ENCODE measurements at regions of chr11 and their contacts with region 1.

Region 1: DNA sequence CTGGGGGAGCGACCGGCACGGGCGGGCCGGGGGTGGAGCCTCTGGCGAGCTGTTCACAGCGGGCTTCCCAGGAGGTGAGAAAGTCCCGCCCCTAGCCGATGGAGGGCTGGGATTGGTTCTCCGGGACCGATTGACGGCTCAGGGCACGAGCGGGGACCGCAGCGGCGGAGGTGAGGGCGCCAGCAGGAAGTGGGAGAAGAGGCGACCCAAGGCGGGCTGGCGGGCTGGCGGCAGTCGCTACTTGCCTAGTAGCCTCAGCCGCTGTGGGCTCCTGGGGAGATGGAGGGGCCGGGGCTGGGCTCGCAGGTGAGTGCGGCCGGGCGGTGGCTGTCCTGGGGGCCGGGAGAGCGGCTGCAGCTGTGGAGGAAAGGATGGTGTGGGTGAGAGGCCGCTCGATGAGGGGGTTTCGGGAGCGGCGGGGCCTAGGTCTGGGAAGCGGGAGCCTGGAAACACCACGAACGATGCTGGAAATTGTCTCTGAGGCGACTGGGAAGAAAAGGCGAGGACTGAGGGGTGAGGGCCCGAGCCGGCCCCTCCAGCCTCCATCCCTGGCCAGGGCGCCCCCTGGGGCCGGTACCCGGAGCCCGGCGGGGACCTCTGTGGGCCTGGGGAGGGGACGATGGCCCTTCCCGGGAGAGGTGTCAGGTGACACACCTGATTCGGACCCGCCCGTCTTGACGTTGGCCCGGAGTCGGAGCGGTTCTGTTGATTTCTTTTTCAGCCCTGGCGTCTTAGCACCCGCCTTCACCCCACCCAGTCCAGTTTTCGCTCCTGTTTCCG is at the start of gene ZDHHC13:
- DNase-seq: peak; percentile 80 to 94 (median 92)
- ATAC-seq: peak; percentile 99
- H3K4me3 ChIP-seq: peak within 1 kb of the TSS; percentile 82
- H3K4me3 Mint-ChIP-seq: peak within 1 kb of the TSS; percentile 89 to 95 (median 93)
- H3K27ac ChIP-seq: peak within 1 kb of the TSS; percentile 73
- H3K27ac Mint-ChIP-seq: peak within 1 kb of the TSS; percentile 72 to 93 (median 89)
- H3K4me1 ChIP-seq: peaks cover 11 to 14% of the 10 kb centered on the region in 2 donors
- H3K4me1 Mint-ChIP-seq: peaks cover 35 to 57% (median 53%) of the 10 kb centered on the region in 7 donors
- H3K27me3 ChIP-seq: no peaks in the 10 kb centered on the region
- H3K27me3 Mint-ChIP-seq: peaks cover 0 to 17% (median 0%) of the 10 kb centered on the region in 5 donors
- total RNA-seq, gene ZDHHC13: 9.3 to 21.3 (median 14.2) TPM

Region 2: DNA sequence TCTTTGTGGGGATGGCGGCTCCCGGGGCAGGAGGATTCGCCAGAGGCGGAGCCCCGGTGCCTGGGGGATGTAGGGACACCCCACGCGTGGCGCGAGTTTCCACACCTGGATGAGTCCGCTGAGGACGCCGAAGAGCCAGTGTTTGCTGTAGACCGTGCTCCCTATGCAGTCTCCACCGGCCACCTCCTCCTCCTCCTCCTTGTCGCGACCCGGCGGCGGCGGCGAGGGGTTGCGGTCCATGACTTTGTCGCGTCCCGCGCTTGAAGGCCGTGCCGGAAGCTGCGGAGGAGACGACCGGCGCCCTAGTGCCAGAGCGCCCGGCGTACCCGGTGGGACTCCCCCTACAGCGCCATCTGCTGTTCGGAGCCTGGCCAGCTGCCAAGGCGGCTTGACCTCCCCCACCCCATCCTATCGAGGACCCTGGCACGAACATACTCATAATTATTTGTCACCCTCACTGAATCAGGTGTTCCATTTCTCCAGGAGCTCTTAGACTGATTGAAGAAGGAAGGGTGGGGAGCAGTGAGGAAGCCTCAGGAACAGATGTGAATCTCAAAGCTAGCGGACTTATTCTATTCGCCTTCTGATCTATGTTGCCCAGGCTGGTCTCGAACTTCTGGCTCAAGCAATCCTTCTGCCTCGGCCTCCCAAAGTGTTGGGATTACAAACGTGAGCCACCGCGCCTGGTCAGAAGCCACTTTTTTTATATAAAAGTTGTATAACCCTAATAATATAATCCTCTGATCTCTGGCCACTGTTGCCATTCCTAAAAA is 1011.2 kb before region 1 on chr11 and contains the start of gene SAAL1:
- CTCF ChIA-PET with region 1: no interaction called
- POLR2A ChIA-PET with region 1: no interaction called
- intact Hi-C with region 1: loop called in 1 of 2 experiments (anchors 10 kb)
- DNase-seq: peak; percentile 80 to 95 (median 84)
- ATAC-seq: peak; percentile 99
- H3K4me3 ChIP-seq: peak within 1 kb of the TSS; percentile 93
- H3K4me3 Mint-ChIP-seq: peak within 1 kb of the TSS; percentile 84 to 95 (median 93)
- H3K27ac ChIP-seq: peak within 1 kb of the TSS; percentile 78
- H3K27ac Mint-ChIP-seq: peak within 1 kb of the TSS; percentile 77 to 93 (median 90)
- H3K4me1 ChIP-seq: peaks cover 14 to 15% of the 10 kb centered on the region in 2 donors
- H3K4me1 Mint-ChIP-seq: peaks cover 21 to 54% (median 42%) of the 10 kb centered on the region in 7 donors
- H3K27me3 ChIP-seq: no peaks in the 10 kb centered on the region
- H3K27me3 Mint-ChIP-seq: peaks cover 0 to 15% (median 0%) of the 10 kb centered on the region in 5 donors
- total RNA-seq, gene SAAL1: 16.0 to 25.3 (median 19.3) TPM

Region 3: GRCh38 chr11:19076744-19077589 is 40.2 kb before region 1 on chr11:
- CTCF ChIA-PET with region 1: no interaction called
- POLR2A ChIA-PET with region 1: no interaction called
- intact Hi-C with region 1: loop called (anchors 1 to 2 kb)
- DNase-seq: peak; percentile 13 to 64 (median 43)
- ATAC-seq: peak; percentile 86
- H3K4me3 ChIP-seq: no peak overlapping the region
- H3K4me3 Mint-ChIP-seq: no peak overlapping the region
- H3K27ac ChIP-seq: no peak overlapping the region
- H3K27ac Mint-ChIP-seq: peak overlapping the region in 1 of 9 donors; percentile 6
- H3K4me1 ChIP-seq: no peaks in the 10 kb centered on the region
- H3K4me1 Mint-ChIP-seq: peaks cover 0 to 3% (median 0%) of the 10 kb centered on the region in 7 donors
- H3K27me3 ChIP-seq: no peaks in the 10 kb centered on the region
- H3K27me3 Mint-ChIP-seq: peaks cover 0 to 14% (median 6%) of the 10 kb centered on the region in 5 donors

Region 4: GRCh38 chr11:19240420-19241259 is 123.5 kb after region 1 on chr11 and contains the start of gene E2F8:
- CTCF ChIA-PET with region 1: no interaction called
- POLR2A ChIA-PET with region 1: interaction called, 3 read pairs
- intact Hi-C with region 1: loop called (anchors 1 kb)
- DNase-seq: peak; percentile 42 to 95 (median 62)
- ATAC-seq: peak; percentile 86
- H3K4me3 ChIP-seq: peak within 1 kb of the TSS; percentile 75
- H3K4me3 Mint-ChIP-seq: peak within 1 kb of the TSS; percentile 73 to 97 (median 85)
- H3K27ac ChIP-seq: no peak within 1 kb of the TSS
- H3K27ac Mint-ChIP-seq: peak within 1 kb of the TSS in 2 of 9 donors; percentile 41 to 85
- H3K4me1 ChIP-seq: peaks cover 12 to 13% of the 10 kb centered on the region in 2 donors
- H3K4me1 Mint-ChIP-seq: peaks cover 8 to 49% (median 22%) of the 10 kb centered on the region in 7 donors
- H3K27me3 ChIP-seq: peaks cover 8 to 25% of the 10 kb centered on the region in 2 donors
- H3K27me3 Mint-ChIP-seq: peaks cover 6 to 43% (median 35%) of the 10 kb centered on the region in 5 donors
- total RNA-seq, gene E2F8: 0.17 to 25.4 TPM in 2 of 5 experiments, not detected in the others

Region 5: GRCh38 chr11:19712281-19713220 is 595.4 kb after region 1 on chr11 and contains the start of gene NAV2:
- CTCF ChIA-PET with region 1: no interaction called
- POLR2A ChIA-PET with region 1: no interaction called
- intact Hi-C with region 1: loop called (anchors 2 to 5 kb)
- DNase-seq: peak; percentile 43 to 80 (median 62)
- ATAC-seq: peak; percentile 98
- H3K4me3 ChIP-seq: peak within 1 kb of the TSS; percentile 81
- H3K4me3 Mint-ChIP-seq: peak within 1 kb of the TSS; percentile 91 to 98 (median 94)
- H3K27ac ChIP-seq: peak within 1 kb of the TSS; percentile 24
- H3K27ac Mint-ChIP-seq: peak within 1 kb of the TSS; percentile 63 to 87 (median 77)
- H3K4me1 ChIP-seq: peaks cover 14 to 18% of the 10 kb centered on the region in 2 donors
- H3K4me1 Mint-ChIP-seq: peaks cover 6 to 27% (median 24%) of the 10 kb centered on the region in 7 donors
- H3K27me3 ChIP-seq: peaks cover 14% of the 10 kb centered on the region in 2 donors
- H3K27me3 Mint-ChIP-seq: peaks cover 23 to 69% (median 33%) of the 10 kb centered on the region in 5 donors
- total RNA-seq, gene NAV2: 0.24 to 2.2 (median 0.48) TPM

Region 6: DNA sequence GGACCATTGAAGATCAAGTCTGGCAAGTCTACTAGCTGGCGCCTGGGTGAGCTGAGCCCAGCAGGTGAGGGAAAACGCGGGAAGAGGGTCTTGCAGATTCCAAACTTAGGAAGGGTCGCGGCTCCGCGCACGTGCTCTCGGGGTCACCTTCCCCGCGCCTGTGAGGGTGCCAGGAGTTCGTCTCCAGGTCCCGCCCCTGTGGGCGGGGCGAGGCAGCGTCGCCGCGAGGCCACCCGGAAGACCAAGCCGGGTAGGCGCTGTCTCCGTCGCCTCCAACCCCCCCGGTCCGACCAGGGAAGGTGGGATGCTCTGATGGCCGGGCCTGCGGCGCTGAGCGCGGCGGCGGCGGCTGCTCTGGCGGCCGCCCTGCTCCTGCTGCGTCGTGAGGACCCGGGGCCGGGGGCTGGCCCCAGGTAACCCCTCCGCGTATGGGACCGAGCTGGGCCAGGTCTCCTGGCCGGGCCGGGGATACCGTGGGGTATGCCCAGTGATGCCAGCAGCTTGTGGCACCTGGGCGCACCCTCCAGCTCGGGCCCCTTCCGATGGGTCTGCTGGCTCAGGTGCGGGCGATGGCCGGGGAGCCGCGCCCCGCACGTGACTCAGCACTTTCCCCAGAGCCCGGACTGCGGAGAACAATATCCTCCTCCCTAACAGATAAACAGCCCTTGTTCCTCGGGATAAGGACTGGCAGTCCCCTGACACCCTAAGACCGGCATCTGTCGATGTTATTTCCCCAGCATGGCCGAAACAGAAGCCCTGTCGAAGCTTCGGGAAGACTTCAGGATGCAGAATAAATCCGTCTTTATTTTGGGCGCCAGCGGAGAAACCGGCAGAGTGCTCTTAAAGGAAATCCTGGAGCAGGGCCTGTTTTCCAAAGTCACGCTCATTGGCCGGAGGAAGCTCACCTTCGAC is 1246.6 kb after region 1 on chr11 and contains the start of gene HTATIP2:
- CTCF ChIA-PET with region 1: no interaction called
- POLR2A ChIA-PET with region 1: no interaction called
- intact Hi-C with region 1: loop called in 1 of 2 experiments (anchors 10 kb)
- DNase-seq: peak; percentile 62 to 78 (median 72)
- ATAC-seq: peak; percentile 92
- H3K4me3 ChIP-seq: peak within 1 kb of the TSS; percentile 73
- H3K4me3 Mint-ChIP-seq: peak within 1 kb of the TSS; percentile 88 to 96 (median 94)
- H3K27ac ChIP-seq: peak within 1 kb of the TSS; percentile 77
- H3K27ac Mint-ChIP-seq: peak within 1 kb of the TSS; percentile 87 to 97 (median 93)
- H3K4me1 ChIP-seq: peaks cover 27 to 29% of the 10 kb centered on the region in 2 donors
- H3K4me1 Mint-ChIP-seq: peaks cover 33 to 75% (median 72%) of the 10 kb centered on the region in 7 donors
- H3K27me3 ChIP-seq: no peaks in the 10 kb centered on the region
- H3K27me3 Mint-ChIP-seq: no peaks in the 10 kb centered on the region
- total RNA-seq, gene HTATIP2: 12.0 to 47.1 (median 38.6) TPM

Measured in naive thymus-derived CD4-positive, alpha-beta T cell (primary cell).